ENCODE measurements at regions of chr2 and their contacts with region 1.

Region 1: GRCh38 chr2:224513991-224514390 is 71.2 kb downstream of the CUL3 start:
- DNase-seq: no peak
- H3K4me3 ChIP-seq: no peak overlapping the region
- H3K27ac ChIP-seq: no peak overlapping the region
- H3K4me1 ChIP-seq: peaks cover 4% of the 10 kb centered on the region
- H3K27me3 ChIP-seq: no peaks in the 10 kb centered on the region
- CTCF ChIP-seq: no peak

Region 2: GRCh38 chr2:223909001-223909741 is 604.8 kb before region 1 on chr2:
- CTCF ChIA-PET with region 1: no interaction called
- POLR2A ChIA-PET with region 1: no interaction called
- intact Hi-C with region 1: no loop called
- DNase-seq: no peak
- H3K4me3 ChIP-seq: no peak overlapping the region
- H3K27ac ChIP-seq: no peak overlapping the region
- H3K4me1 ChIP-seq: no peaks in the 10 kb centered on the region
- H3K27me3 ChIP-seq: no peaks in the 10 kb centered on the region
- CTCF ChIP-seq: no peak

Region 3: DNA sequence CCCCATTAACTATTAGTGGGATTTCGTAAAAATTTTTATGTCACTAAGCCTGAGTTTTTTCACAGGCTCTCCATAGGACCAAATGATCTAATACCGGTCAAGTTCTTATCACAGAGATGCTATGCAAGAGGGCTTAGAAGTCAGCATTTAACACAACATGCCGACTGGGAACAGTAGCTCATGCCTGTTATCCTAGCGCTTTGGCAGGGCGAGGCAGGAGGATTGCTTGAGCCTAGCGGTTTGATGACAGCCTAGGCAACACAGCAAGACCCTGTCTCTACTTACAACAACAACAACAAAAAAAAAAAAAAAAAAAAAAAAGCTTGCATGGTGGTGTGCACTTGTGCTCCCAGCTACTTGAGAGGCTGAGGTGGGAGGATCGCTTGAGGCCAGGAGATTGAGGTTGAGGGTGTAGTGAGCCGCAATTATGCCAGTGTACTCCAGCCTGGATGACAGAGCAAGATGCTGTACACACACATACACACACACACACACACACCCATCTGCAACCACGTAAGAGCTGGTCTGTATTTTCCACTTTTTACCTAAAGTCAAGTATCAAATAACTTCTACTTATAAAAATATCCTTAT is 44.5 kb before region 1 on chr2:
- CTCF ChIA-PET with region 1: interaction called, 5 read pairs
- POLR2A ChIA-PET with region 1: no interaction called
- intact Hi-C with region 1: loop called (anchors 5 kb)
- DNase-seq: no peak
- H3K4me3 ChIP-seq: no peak overlapping the region
- H3K27ac ChIP-seq: no peak overlapping the region
- H3K4me1 ChIP-seq: no peaks in the 10 kb centered on the region
- H3K27me3 ChIP-seq: no peaks in the 10 kb centered on the region
- CTCF ChIP-seq: no peak

Region 4: GRCh38 chr2:224498991-224499390 is 15.0 kb before region 1 on chr2:
- CTCF ChIA-PET with region 1: no interaction called
- POLR2A ChIA-PET with region 1: no interaction called
- intact Hi-C with region 1: loop called (anchors 2 kb)
- DNase-seq: no peak
- H3K4me3 ChIP-seq: no peak overlapping the region
- H3K27ac ChIP-seq: no peak overlapping the region
- H3K4me1 ChIP-seq: no peaks in the 10 kb centered on the region
- H3K27me3 ChIP-seq: no peaks in the 10 kb centered on the region
- CTCF ChIP-seq: no peak

Region 5: DNA sequence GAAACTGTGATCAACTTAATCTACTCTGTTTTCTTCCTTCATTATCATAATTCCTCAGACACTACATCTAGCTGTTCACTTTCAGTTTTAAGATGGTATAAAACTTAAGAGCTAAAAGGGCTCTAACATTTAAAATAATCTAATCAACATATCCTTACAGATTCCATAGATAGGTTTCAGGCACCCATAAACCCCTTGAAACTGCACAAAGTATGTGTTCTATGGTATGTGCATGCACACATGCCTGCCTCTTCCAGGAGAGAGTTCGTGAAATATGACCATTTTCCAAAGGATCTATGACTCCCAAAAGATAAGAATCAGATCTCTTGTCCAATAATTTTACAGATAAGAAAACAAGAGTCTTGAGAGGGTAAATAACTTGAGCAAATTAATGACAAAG is 11.8 kb after region 1 on chr2:
- CTCF ChIA-PET with region 1: no interaction called
- POLR2A ChIA-PET with region 1: no interaction called
- intact Hi-C with region 1: loop called (anchors 2 kb)
- DNase-seq: no peak
- H3K4me3 ChIP-seq: no peak overlapping the region
- H3K27ac ChIP-seq: no peak overlapping the region
- H3K4me1 ChIP-seq: peaks cover 9% of the 10 kb centered on the region
- H3K27me3 ChIP-seq: no peaks in the 10 kb centered on the region
- CTCF ChIP-seq: no peak

Region 6: DNA sequence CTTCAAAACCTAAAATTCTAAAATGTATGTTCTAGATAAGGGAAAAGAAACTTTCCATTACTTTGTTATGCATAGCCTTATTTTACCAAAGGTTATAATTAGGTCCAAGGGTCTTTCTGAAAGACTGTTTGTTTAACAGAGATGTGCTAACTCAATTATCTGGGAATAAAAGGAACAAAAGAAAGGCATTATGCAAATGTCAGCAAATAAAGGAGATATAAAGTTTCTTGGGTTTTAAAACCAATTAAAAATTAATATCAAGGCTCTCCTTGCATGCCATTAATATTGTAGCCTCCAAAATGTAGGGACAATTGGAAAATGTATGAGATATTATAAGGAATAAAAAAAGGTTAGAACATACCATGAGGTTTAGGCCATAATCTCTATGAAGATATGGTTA is 616.1 kb after region 1 on chr2:
- CTCF ChIA-PET with region 1: no interaction called
- POLR2A ChIA-PET with region 1: no interaction called
- intact Hi-C with region 1: no loop called
- DNase-seq: no peak
- H3K4me3 ChIP-seq: no peak overlapping the region
- H3K27ac ChIP-seq: no peak overlapping the region
- H3K4me1 ChIP-seq: no peaks in the 10 kb centered on the region
- H3K27me3 ChIP-seq: no peaks in the 10 kb centered on the region
- CTCF ChIP-seq: no peak